CD8-positive, alpha-beta T cell (primary cell): ENCODE measurements at regions of chr6 and their contacts with region 1.

Region 1: GRCh38 chr6:110389689-110390382 is 25.5 kb downstream of the DDO start:
- DNase-seq: peak in 3 of 9 experiments; percentile 14 to 53 (median 36)
- ATAC-seq: peak; percentile 45
- H3K4me3 ChIP-seq: no peak overlapping the region
- H3K4me3 Mint-ChIP-seq: peak overlapping the region; percentile 35
- H3K27ac ChIP-seq: peak overlapping the region in 1 of 2 experiments; percentile 26
- H3K27ac Mint-ChIP-seq: peak overlapping the region; percentile 93
- H3K4me1 ChIP-seq: peaks cover 33% of the 10 kb centered on the region
- H3K4me1 Mint-ChIP-seq: peaks cover 39% of the 10 kb centered on the region
- H3K27me3 ChIP-seq: no peaks in the 10 kb centered on the region
- H3K27me3 Mint-ChIP-seq: no peaks in the 10 kb centered on the region
- CTCF ChIP-seq: no peak

Region 2: GRCh38 chr6:109526905-109527628 is 862.8 kb before region 1 on chr6:
- CTCF ChIA-PET with region 1: interaction called, 6 read pairs
- POLR2A ChIA-PET with region 1: no interaction called
- intact Hi-C with region 1: loop called in 1 of 2 experiments (anchors 1 kb)
- DNase-seq: peak in 8 of 9 experiments; percentile 31 to 74 (median 55)
- ATAC-seq: peak; percentile 68
- H3K4me3 ChIP-seq: no peak overlapping the region
- H3K4me3 Mint-ChIP-seq: no peak overlapping the region
- H3K27ac ChIP-seq: no peak overlapping the region
- H3K27ac Mint-ChIP-seq: no peak overlapping the region
- H3K4me1 ChIP-seq: no peaks in the 10 kb centered on the region
- H3K4me1 Mint-ChIP-seq: peaks cover 3% of the 10 kb centered on the region
- H3K27me3 ChIP-seq: no peaks in the 10 kb centered on the region
- H3K27me3 Mint-ChIP-seq: no peaks in the 10 kb centered on the region
- CTCF ChIP-seq: peak; percentile 58

Region 3: DNA sequence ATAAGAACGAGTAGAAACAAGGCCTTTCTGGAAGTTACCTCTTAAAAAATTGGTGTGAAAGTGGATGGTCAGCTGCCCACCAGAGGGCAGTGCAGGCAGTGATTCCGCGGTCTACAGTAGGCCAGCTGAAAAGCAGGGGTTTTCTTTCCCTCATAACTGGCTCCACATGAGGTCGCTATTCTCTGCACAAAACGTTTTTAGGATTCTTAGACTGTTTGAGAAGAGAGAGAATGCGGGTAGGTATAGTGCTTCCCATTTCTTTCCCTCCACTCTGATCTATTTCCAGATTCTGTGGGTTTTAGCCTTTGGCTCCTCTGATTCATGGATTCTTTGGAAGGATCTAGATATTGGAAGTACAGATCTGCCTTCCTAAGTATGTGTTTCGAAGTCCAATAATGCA is 684.6 kb before region 1 on chr6:
- CTCF ChIA-PET with region 1: interaction called, 26 read pairs
- POLR2A ChIA-PET with region 1: interaction called, 4 read pairs
- intact Hi-C with region 1: loop called (anchors 1 kb)
- DNase-seq: peak; percentile 50 to 90 (median 72)
- ATAC-seq: peak; percentile 98
- H3K4me3 ChIP-seq: no peak overlapping the region
- H3K4me3 Mint-ChIP-seq: no peak overlapping the region
- H3K27ac ChIP-seq: no peak overlapping the region
- H3K27ac Mint-ChIP-seq: no peak overlapping the region
- H3K4me1 ChIP-seq: peaks cover 10% of the 10 kb centered on the region
- H3K4me1 Mint-ChIP-seq: peaks cover 27% of the 10 kb centered on the region
- H3K27me3 ChIP-seq: no peaks in the 10 kb centered on the region
- H3K27me3 Mint-ChIP-seq: no peaks in the 10 kb centered on the region
- CTCF ChIP-seq: peak; percentile 82

Region 4: DNA sequence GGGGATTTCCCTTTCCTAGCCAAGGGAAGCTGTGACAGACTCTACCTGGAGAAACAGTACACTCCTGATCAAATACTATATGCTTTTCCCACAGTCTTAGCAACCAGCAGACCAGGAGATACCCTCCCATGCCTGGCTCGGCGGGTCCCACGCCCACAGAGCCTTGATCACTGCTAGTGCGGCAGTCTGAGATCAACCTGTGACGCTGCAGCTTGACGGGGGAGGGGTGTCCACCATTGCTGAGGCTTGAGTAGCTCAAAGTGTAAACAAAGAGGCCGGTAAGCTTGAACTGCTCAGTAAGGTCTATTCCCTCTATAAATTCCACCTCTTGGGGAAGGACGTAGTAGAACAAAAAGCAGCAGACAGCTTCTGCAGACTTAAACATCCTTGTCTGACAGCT is 273.6 kb before region 1 on chr6:
- CTCF ChIA-PET with region 1: no interaction called
- POLR2A ChIA-PET with region 1: no interaction called
- intact Hi-C with region 1: no loop called
- DNase-seq: no peak
- ATAC-seq: no peak
- H3K4me3 ChIP-seq: no peak overlapping the region
- H3K4me3 Mint-ChIP-seq: no peak overlapping the region
- H3K27ac ChIP-seq: no peak overlapping the region
- H3K27ac Mint-ChIP-seq: no peak overlapping the region
- H3K4me1 ChIP-seq: no peaks in the 10 kb centered on the region
- H3K4me1 Mint-ChIP-seq: no peaks in the 10 kb centered on the region
- H3K27me3 ChIP-seq: no peaks in the 10 kb centered on the region
- H3K27me3 Mint-ChIP-seq: no peaks in the 10 kb centered on the region
- CTCF ChIP-seq: no peak

Region 5: DNA sequence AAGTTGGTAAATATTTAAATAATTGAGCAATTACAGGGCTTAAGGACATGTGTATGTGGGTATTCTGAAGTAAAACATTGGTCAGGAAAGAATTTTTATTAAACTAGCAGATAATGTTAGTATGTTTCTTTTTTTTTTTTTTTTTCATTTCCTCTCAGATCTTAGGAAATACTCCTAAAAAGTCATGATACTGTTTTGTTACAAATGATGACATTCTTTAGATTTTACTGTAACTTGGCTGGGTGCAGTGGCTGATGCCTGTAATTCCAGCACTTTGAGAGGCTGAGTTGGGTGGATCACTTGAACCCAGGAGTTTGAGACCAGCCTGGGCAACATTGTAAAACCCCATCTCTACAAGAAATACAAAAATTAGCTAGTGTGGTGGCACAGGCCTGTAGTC is 168.1 kb before region 1 on chr6:
- CTCF ChIA-PET with region 1: interaction called, 7 read pairs
- POLR2A ChIA-PET with region 1: no interaction called
- intact Hi-C with region 1: loop called (anchors 5 to 10 kb)
- DNase-seq: no peak
- ATAC-seq: no peak
- H3K4me3 ChIP-seq: no peak overlapping the region
- H3K4me3 Mint-ChIP-seq: no peak overlapping the region
- H3K27ac ChIP-seq: no peak overlapping the region
- H3K27ac Mint-ChIP-seq: no peak overlapping the region
- H3K4me1 ChIP-seq: no peaks in the 10 kb centered on the region
- H3K4me1 Mint-ChIP-seq: no peaks in the 10 kb centered on the region
- H3K27me3 ChIP-seq: no peaks in the 10 kb centered on the region
- H3K27me3 Mint-ChIP-seq: no peaks in the 10 kb centered on the region
- CTCF ChIP-seq: no peak

Region 6: DNA sequence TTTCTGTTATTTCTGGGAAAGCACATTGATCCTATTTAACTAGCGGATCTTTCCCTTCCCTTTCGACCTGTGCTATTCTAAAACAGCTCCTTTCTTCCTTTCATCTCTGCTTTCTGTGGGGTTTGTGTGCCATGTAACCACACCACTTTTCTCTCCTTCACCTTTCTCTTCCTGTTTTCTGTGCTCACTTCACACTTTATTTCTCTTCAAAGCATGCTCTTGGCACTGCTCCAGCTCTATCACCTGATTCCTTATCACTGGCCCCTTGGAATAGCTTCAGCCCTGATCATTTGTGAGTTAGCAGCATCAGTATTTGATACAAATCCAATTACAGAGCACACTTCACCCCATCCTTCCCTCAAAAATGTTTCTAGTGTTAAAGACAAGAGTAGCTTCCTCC is 23.6 kb before region 1 on chr6:
- CTCF ChIA-PET with region 1: interaction called, 19 read pairs
- POLR2A ChIA-PET with region 1: interaction called, 4 read pairs
- intact Hi-C with region 1: loop called in 1 of 2 experiments (anchors 2 kb)
- DNase-seq: peak in 2 of 9 experiments; percentile 42 to 58
- ATAC-seq: no peak
- H3K4me3 ChIP-seq: peak overlapping the region in 1 of 2 experiments; percentile 17
- H3K4me3 Mint-ChIP-seq: peak overlapping the region; percentile 49
- H3K27ac ChIP-seq: peak overlapping the region in 1 of 2 experiments; percentile 50
- H3K27ac Mint-ChIP-seq: peak overlapping the region; percentile 78
- H3K4me1 ChIP-seq: peaks cover 51% of the 10 kb centered on the region
- H3K4me1 Mint-ChIP-seq: peaks cover 54% of the 10 kb centered on the region
- H3K27me3 ChIP-seq: no peaks in the 10 kb centered on the region
- H3K27me3 Mint-ChIP-seq: no peaks in the 10 kb centered on the region
- CTCF ChIP-seq: no peak

Region 7: GRCh38 chr6:110378552-110378951 is 11.3 kb before region 1 on chr6:
- CTCF ChIA-PET with region 1: interaction called, 11 read pairs
- POLR2A ChIA-PET with region 1: no interaction called
- intact Hi-C with region 1: no loop called
- DNase-seq: no peak
- ATAC-seq: no peak
- H3K4me3 ChIP-seq: no peak overlapping the region
- H3K4me3 Mint-ChIP-seq: no peak overlapping the region
- H3K27ac ChIP-seq: no peak overlapping the region
- H3K27ac Mint-ChIP-seq: no peak overlapping the region
- H3K4me1 ChIP-seq: no peaks in the 10 kb centered on the region
- H3K4me1 Mint-ChIP-seq: no peaks in the 10 kb centered on the region
- H3K27me3 ChIP-seq: no peaks in the 10 kb centered on the region
- H3K27me3 Mint-ChIP-seq: peaks cover 2% of the 10 kb centered on the region
- CTCF ChIP-seq: no peak